ENCODE measurements at regions of chr14 and their contacts with region 1.

Region 1: GRCh38 chr14:81220830-81221578 is at the start of gene GTF2A1:
- DNase-seq: peak; percentile 92
- ATAC-seq: peak; percentile 70
- H3K4me3 Mint-ChIP-seq: peak within 1 kb of the TSS; percentile 98
- H3K27ac Mint-ChIP-seq: peak within 1 kb of the TSS; percentile 100
- H3K4me1 Mint-ChIP-seq: peaks cover 35% of the 10 kb centered on the region
- H3K27me3 Mint-ChIP-seq: no peaks in the 10 kb centered on the region
- CTCF ChIP-seq: no peak
- total RNA-seq, gene GTF2A1: 38.5 and 40.9 TPM in 2 replicates

Region 2: DNA sequence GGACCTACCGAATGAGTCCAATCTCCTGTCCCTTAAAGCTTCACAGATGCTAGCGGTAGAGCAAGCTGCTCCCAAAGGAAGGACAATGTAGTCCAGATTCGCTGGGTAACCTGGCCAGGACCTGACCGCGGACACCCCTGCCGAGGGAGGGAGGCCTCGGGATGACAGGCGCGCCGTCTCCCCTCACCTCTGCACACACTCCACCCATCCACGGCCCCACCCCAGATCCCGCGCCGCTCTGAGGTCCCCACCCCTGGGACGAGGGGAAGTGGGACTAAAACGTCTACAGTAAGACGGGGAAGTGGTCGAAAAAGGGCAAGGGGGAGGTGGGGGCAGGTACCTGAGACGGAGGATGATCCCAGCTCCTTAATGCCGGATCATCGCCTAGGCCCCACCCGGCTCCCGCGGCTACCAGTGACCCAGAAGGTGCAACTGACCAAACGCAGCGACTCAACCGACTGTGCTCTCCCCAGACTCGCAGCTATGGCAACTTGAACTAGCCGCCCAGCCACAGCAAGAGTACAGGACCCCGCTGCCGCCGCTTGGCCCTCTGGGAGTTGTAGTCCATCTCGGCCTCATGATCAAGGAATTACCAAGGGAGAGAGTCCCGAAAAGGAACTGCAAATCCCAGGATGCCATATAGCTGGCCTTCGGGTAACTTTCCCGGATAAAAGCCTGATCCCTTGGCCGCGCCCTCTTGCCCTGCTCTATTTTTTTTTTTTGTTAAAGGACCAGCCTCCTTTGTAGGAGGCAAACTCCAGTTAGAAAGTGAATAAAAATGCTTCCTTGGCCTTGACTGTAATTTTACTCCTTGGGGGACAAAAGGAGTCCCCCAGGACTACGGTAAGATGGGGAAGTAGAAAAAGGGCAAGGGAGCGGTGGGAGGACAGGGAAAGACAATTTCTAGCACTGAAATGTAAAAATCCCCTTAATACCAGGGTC is 279.5 kb before region 1 on chr14 and contains the start of gene CEP128:
- CTCF ChIA-PET with region 1: no interaction called
- POLR2A ChIA-PET with region 1: interaction called, 16 read pairs
- intact Hi-C with region 1: loop called (anchors 1 kb)
- DNase-seq: peak; percentile 70
- ATAC-seq: peak; percentile 95
- H3K4me3 Mint-ChIP-seq: peak within 1 kb of the TSS; percentile 90
- H3K27ac Mint-ChIP-seq: peak within 1 kb of the TSS; percentile 70
- H3K4me1 Mint-ChIP-seq: peaks cover 32% of the 10 kb centered on the region
- H3K27me3 Mint-ChIP-seq: peaks cover 3% of the 10 kb centered on the region
- CTCF ChIP-seq: no peak
- total RNA-seq, gene CEP128: 21.1 and 25.0 TPM in 2 replicates

Region 3: GRCh38 chr14:81234278-81234677 is 13.3 kb after region 1 on chr14:
- CTCF ChIA-PET with region 1: no interaction called
- POLR2A ChIA-PET with region 1: interaction called, 11 read pairs
- intact Hi-C with region 1: no loop called
- DNase-seq: no peak
- ATAC-seq: no peak
- H3K4me3 Mint-ChIP-seq: no peak overlapping the region
- H3K27ac Mint-ChIP-seq: no peak overlapping the region
- H3K4me1 Mint-ChIP-seq: peaks cover 3% of the 10 kb centered on the region
- H3K27me3 Mint-ChIP-seq: no peaks in the 10 kb centered on the region
- CTCF ChIP-seq: no peak

Region 4: DNA sequence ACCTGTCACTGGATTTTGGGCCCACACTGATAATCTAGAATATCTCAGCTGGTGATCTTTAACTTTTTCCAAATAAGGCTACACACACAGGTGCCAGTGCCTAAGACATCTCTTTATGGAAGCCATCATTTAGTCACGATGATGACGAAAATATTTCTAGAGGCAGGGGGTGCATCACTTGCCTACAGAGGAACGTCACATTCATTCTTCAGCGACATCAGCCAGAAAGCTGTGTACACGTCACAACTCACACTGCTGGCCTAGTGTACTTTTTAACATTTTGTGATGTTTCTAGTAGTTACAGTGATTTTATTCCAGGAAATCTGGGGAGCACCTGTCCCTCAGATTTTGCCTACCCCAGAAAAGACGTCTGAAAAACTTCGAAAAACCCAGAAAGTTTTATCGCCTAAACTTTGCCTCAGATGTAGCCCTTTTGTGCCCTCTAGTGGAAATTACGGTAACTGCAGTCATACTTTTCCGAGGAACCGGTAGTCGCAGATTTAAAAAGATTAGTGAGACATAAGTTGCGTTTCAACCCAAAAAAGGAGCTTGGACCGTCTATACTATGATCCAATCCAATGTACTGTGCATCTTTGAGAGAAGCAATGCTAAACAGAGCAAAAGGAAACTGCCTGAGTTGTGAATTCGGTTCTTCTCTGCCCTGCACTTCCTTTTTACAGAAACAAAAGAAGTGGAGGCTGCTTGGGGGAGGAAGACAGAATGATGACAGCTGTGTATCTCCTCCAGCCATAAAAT is 243.4 kb after region 1 on chr14:
- CTCF ChIA-PET with region 1: interaction called, 4 read pairs
- POLR2A ChIA-PET with region 1: interaction called, 4 read pairs
- intact Hi-C with region 1: loop called (anchors 2 kb)
- DNase-seq: no peak
- ATAC-seq: peak; percentile 76
- H3K4me3 Mint-ChIP-seq: peak overlapping the region; percentile 81
- H3K27ac Mint-ChIP-seq: peak overlapping the region; percentile 76
- H3K4me1 Mint-ChIP-seq: peaks cover 6% of the 10 kb centered on the region
- H3K27me3 Mint-ChIP-seq: no peaks in the 10 kb centered on the region
- CTCF ChIP-seq: peak; percentile 77

Region 5: DNA sequence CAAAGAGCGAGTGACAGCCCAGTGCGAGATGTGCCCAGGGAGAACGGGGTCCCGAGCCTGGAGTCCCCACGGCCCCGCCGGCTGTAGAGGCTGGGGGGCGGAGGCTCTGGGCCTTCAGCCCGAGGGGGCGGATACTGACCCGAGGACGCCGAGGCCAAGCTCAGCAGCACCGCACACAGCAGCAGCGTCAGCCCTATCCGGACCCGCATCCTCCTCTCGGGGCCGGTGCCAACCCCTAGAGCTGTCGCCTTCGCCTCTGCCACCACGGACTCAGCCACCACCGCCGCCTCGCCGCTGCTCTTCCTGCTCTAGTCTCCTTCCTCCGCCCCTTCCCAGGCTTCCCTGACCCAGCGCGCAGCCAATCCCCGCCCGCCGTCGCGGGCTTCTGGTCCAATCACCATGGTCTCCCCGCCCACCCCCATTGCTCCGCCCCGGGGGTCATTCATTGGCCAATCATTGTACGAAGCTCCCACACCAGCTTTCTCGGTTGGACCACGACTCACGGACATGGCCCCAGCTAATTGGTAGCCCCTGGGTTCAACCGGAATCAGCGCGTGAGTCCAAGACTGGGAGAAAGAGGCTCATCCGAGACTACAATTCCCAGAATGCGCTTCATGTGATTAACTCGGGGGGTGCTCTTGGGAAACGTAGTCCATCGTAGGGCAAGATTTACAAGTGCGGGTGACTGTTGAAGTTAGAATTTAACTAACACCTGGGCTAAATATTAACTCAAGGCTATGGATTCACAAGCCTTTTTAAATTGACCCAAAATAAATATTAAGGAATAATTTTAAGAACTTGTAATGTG is 312.7 kb after region 1 on chr14 and contains the start of gene SEL1L:
- CTCF ChIA-PET with region 1: no interaction called
- POLR2A ChIA-PET with region 1: interaction called, 25 read pairs
- intact Hi-C with region 1: loop called (anchors 1 kb)
- DNase-seq: peak; percentile 99
- ATAC-seq: peak; percentile 96
- H3K4me3 Mint-ChIP-seq: peak within 1 kb of the TSS; percentile 96
- H3K27ac Mint-ChIP-seq: peak within 1 kb of the TSS; percentile 85
- H3K4me1 Mint-ChIP-seq: peaks cover 58% of the 10 kb centered on the region
- H3K27me3 Mint-ChIP-seq: no peaks in the 10 kb centered on the region
- CTCF ChIP-seq: no peak
- total RNA-seq, gene SEL1L: 52.9 and 55.4 TPM in 2 replicates